Activated T-helper 1 cell treated with anti-CD3 and anti-CD28 coated beads, Interleukin-12 subunit alpha, Interleukin-12 subunit beta, Interleukin-2, Interleukin-4 antibody, amounts not matched to agents 30 ng/mL and 10 ng/mL and 1 ng/mL, durations not matched to agents 14 hours and 24 hours and 36 hours (primary cell): ENCODE measurements at regions of chr13 and their contacts with region 1.

Region 1: GRCh38 chr13:21297914-21298831 is 121.7 kb downstream of the MRPL57 start:
- DNase-seq: peak; percentile 85
- H3K4me3 Mint-ChIP-seq: peak overlapping the region; percentile 96
- H3K27ac Mint-ChIP-seq: peak overlapping the region; percentile 70
- H3K4me1 Mint-ChIP-seq: peaks cover 36% of the 10 kb centered on the region
- H3K27me3 Mint-ChIP-seq: no peaks in the 10 kb centered on the region

Region 2: GRCh38 chr13:20773194-20774080 is 524.7 kb before region 1 on chr13 and contains the start of gene EEF1AKMT1:
- intact Hi-C with region 1: loop called (anchors 1 kb)
- DNase-seq: peak; percentile 94
- H3K4me3 Mint-ChIP-seq: peak within 1 kb of the TSS; percentile 92
- H3K27ac Mint-ChIP-seq: peak within 1 kb of the TSS; percentile 100
- H3K4me1 Mint-ChIP-seq: peaks cover 29% of the 10 kb centered on the region
- H3K27me3 Mint-ChIP-seq: no peaks in the 10 kb centered on the region
- total RNA-seq, gene EEF1AKMT1: 8.7 and 12.9 TPM in 2 replicates

Region 3: GRCh38 chr13:21176220-21176982 is 121.8 kb before region 1 on chr13 and contains the starts of genes MRPL57 and SKA3:
- intact Hi-C with region 1: loop called (anchors 1 kb)
- DNase-seq: peak; percentile 95
- H3K4me3 Mint-ChIP-seq: peak within 1 kb of the TSS; percentile 98
- H3K27ac Mint-ChIP-seq: peak within 1 kb of the TSS; percentile 96
- H3K4me1 Mint-ChIP-seq: peaks cover 34% of the 10 kb centered on the region
- H3K27me3 Mint-ChIP-seq: no peaks in the 10 kb centered on the region
- total RNA-seq, gene MRPL57: 31.4 and 33.3 TPM in 2 replicates
- total RNA-seq, gene SKA3: 29.4 and 32.4 TPM in 2 replicates

Region 4: GRCh38 chr13:21344662-21345176 is 46.5 kb after region 1 on chr13:
- intact Hi-C with region 1: loop called (anchors 2 kb)
- DNase-seq: peak; percentile 27
- H3K4me3 Mint-ChIP-seq: peak overlapping the region; percentile 76
- H3K27ac Mint-ChIP-seq: peak overlapping the region; percentile 86
- H3K4me1 Mint-ChIP-seq: peaks cover 31% of the 10 kb centered on the region
- H3K27me3 Mint-ChIP-seq: no peaks in the 10 kb centered on the region

Region 5: GRCh38 chr13:21458813-21459701 is 160.9 kb after region 1 on chr13 and contains the start of gene ZDHHC20:
- intact Hi-C with region 1: loop called (anchors 1 kb)
- DNase-seq: peak; percentile 86
- H3K4me3 Mint-ChIP-seq: peak within 1 kb of the TSS; percentile 94
- H3K27ac Mint-ChIP-seq: peak within 1 kb of the TSS; percentile 94
- H3K4me1 Mint-ChIP-seq: peaks cover 32% of the 10 kb centered on the region
- H3K27me3 Mint-ChIP-seq: no peaks in the 10 kb centered on the region
- total RNA-seq, gene ZDHHC20: 61.2 and 66.4 TPM in 2 replicates

Region 6: GRCh38 chr13:21670883-21671619 is 372.9 kb after region 1 on chr13 and contains the start of gene FGF9:
- intact Hi-C with region 1: loop called (anchors 5 kb)
- DNase-seq: peak; percentile 77
- H3K4me3 Mint-ChIP-seq: peak within 1 kb of the TSS; percentile 82
- H3K27ac Mint-ChIP-seq: peak within 1 kb of the TSS; percentile 59
- H3K4me1 Mint-ChIP-seq: peaks cover 42% of the 10 kb centered on the region
- H3K27me3 Mint-ChIP-seq: peaks cover 62% of the 10 kb centered on the region
- total RNA-seq, gene FGF9: 0.23 and 0.47 TPM in 2 replicates